Activated T-helper 2 cell treated with anti-CD3 and anti-CD28 coated beads, Interferon-gamma antibody, Interleukin-2, Interleukin-4, amounts not matched to agents 10 μg/mL and 5 μg/mL and 100 μg/mL, durations not matched to agents 14 hours and 24 hours and 36 hours (primary cell): ENCODE measurements at regions of chr6 and their contacts with region 1.

Region 1: GRCh38 chr6:127924440-127924839 is 23.6 kb upstream of the THEMIS start:
- DNase-seq: no peak
- H3K4me3 Mint-ChIP-seq: no peak overlapping the region
- H3K27ac Mint-ChIP-seq: no peak overlapping the region
- H3K4me1 Mint-ChIP-seq: peaks cover 44% of the 10 kb centered on the region
- H3K27me3 Mint-ChIP-seq: no peaks in the 10 kb centered on the region

Region 2: GRCh38 chr6:127951172-127951917 is 26.9 kb after region 1 on chr6:
- intact Hi-C with region 1: loop called (anchors 2 kb)
- DNase-seq: no peak
- H3K4me3 Mint-ChIP-seq: peak overlapping the region; percentile 56
- H3K27ac Mint-ChIP-seq: peak overlapping the region; percentile 96
- H3K4me1 Mint-ChIP-seq: peaks cover 50% of the 10 kb centered on the region
- H3K27me3 Mint-ChIP-seq: no peaks in the 10 kb centered on the region

Region 3: DNA sequence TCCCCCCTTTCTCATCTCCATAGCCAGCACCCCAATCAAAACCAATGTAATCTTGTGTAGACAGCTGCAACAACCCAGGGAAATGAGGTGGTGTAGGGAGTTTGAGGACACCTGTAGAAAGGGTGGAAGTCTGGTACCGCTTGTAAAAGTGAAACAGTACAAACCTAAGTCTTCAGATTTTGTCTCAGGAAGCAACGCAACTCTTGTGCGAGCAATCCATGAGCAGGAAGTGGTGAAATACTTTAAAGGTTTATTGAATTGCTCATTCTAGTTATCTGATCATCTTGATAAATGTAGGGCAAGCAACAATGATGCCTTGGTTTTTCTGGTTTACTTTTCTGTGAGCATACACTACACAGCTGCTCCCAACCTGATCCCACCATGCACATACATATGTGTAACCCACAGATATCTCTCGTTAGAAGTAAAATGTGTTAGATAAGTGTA is 47.5 kb after region 1 on chr6:
- intact Hi-C with region 1: no loop called
- DNase-seq: peak; percentile 69
- H3K4me3 Mint-ChIP-seq: peak overlapping the region; percentile 76
- H3K27ac Mint-ChIP-seq: peak overlapping the region; percentile 96
- H3K4me1 Mint-ChIP-seq: peaks cover 52% of the 10 kb centered on the region
- H3K27me3 Mint-ChIP-seq: no peaks in the 10 kb centered on the region